MCF 10A (cell line): ENCODE measurements at regions of chr3 and their contacts with region 1.

Region 1: GRCh38 chr3:111594205-111594604 is 941 bp downstream of the ZBED2 start:
- DNase-seq: peak; percentile 75
- H3K4me3 Mint-ChIP-seq: peak overlapping the region; percentile 64
- H3K27ac Mint-ChIP-seq: peak overlapping the region; percentile 82
- H3K4me1 Mint-ChIP-seq: peaks cover 70% of the 10 kb centered on the region
- H3K27me3 Mint-ChIP-seq: no peaks in the 10 kb centered on the region
- CTCF ChIP-seq: no peak

Region 2: GRCh38 chr3:111616417-111617105 is 22.4 kb after region 1 on chr3:
- CTCF ChIA-PET with region 1: interaction called, 3 read pairs
- POLR2A ChIA-PET with region 1: interaction called, 51 read pairs
- intact Hi-C with region 1: no loop called
- DNase-seq: peak; percentile 52
- H3K4me3 Mint-ChIP-seq: no peak overlapping the region
- H3K27ac Mint-ChIP-seq: no peak overlapping the region
- H3K4me1 Mint-ChIP-seq: peaks cover 24% of the 10 kb centered on the region
- H3K27me3 Mint-ChIP-seq: no peaks in the 10 kb centered on the region
- CTCF ChIP-seq: peak; percentile 8